ENCODE measurements at regions of chr2 and their contacts with region 1.

Region 1: GRCh38 chr2:222690564-222691200 is 19.2 kb downstream of the MOGAT1 start:
- DNase-seq: peak; percentile 81 to 86 (median 82)
- ATAC-seq: peak; percentile 98
- H3K4me3 ChIP-seq: no peak overlapping the region
- H3K27ac ChIP-seq: no peak overlapping the region
- H3K4me1 ChIP-seq: peaks cover 0 to 4% of the 10 kb centered on the region in 2 experiments; a peak in 1 of 5 replicates
- H3K27me3 ChIP-seq: no peaks in the 10 kb centered on the region
- CTCF ChIP-seq: peak; percentile 99 to 100 (median 100)
- EP300 ChIP-seq: no peak
- POLR2A ChIP-seq: no peak
- RAD21 ChIP-seq: peak; percentile 72 to 90

Region 2: DNA sequence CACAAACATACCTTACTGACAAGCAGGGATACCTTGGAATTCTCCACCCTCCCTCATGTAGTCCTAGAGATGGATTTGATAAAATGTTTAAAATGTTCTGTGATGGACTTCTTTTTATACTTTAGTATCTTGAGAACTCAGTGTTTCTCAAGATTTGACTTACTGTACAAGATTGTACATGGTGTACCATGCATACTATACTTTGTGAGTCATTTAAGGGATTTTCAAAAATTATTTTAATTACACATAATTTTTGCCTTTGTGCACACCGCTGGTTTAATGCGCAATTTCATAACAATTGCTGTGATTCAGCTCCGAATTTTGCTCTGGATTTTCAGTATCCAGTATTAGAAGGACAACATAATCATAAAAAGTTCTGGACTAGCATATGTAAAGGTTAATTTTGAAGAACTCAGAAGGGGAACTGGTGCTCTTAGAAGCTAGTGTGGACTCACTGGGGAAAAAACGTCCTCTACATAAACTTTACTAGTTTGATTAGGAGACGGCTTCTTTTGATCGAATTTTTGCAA is 91.6 kb after region 1 on chr2:
- CTCF ChIA-PET with region 1: no interaction called
- POLR2A ChIA-PET with region 1: no interaction called
- in situ Hi-C with region 1: no loop called
- intact Hi-C with region 1: no loop called
- DNase-seq: no peak
- ATAC-seq: no peak
- H3K4me3 ChIP-seq: no peak overlapping the region
- H3K27ac ChIP-seq: no peak overlapping the region
- H3K4me1 ChIP-seq: 0 out of 5 replicates have a peak, but pooled peaks cover 0 to 1% of the 10 kb centered on the region in 2 experiments
- H3K27me3 ChIP-seq: no peaks in the 10 kb centered on the region
- CTCF ChIP-seq: no peak
- EP300 ChIP-seq: no peak
- POLR2A ChIP-seq: no peak
- RAD21 ChIP-seq: no peak

Region 3: DNA sequence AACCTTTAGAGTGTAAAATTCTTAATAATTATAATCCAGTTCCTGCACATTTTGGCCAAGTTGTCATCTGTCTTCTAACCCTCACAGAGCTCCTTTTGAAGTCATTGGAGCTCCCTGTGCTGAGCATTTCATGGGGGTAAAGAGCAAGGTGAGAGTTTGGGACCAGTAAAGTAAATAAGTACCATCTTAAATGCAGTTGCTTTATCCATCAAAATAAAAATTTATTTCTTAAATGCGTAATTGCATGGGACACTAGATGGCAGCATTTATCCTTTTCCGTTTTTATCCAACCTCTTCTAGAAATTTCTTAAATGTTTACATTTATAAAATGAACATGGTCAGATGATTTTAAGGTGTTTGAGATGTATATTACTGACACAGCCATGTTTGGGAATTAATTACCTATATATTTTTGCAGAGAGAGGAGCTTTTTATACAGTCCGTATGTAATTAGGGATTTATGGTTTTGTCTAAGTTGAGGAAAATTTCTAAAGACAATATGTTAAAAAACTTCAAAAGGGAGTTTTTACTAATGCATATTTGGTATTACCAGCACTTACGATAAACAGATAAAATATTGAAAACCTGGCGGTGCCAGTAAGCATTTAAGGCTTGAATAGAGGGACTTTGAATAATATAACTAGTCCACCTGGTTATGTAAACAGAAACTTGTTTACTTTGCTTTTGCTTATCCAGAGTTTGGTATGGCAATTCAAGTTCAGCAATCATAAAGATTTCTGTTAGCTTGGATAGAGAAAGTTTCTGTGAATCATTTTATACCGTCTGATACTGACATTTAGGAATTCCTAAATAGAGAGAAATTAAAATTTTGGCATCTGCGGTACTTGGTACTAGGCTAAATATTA is 224.6 kb after region 1 on chr2:
- CTCF ChIA-PET with region 1: no interaction called
- POLR2A ChIA-PET with region 1: interaction called, 4 read pairs
- in situ Hi-C with region 1: loop called (anchors 10 kb)
- intact Hi-C with region 1: no loop called
- DNase-seq: no peak
- ATAC-seq: no peak
- H3K4me3 ChIP-seq: no peak overlapping the region
- H3K27ac ChIP-seq: no peak overlapping the region
- H3K4me1 ChIP-seq: peaks cover 0 to 14% of the 10 kb centered on the region in 2 experiments; a peak in 2 of 5 replicates
- H3K27me3 ChIP-seq: no peaks in the 10 kb centered on the region
- CTCF ChIP-seq: peak in 2 of 3 experiments; percentile 12 to 45; a peak in 3 of 6 replicates
- EP300 ChIP-seq: no peak
- POLR2A ChIP-seq: no peak
- RAD21 ChIP-seq: no peak; a peak in 1 of 4 replicates

Measured in K562 (cell line).